ENCODE measurements at regions of chr15 and their contacts with region 1.

Region 1: GRCh38 chr15:39273717-39274411 is 307.0 kb upstream of the THBS1 start:
- DNase-seq: peak; percentile 100
- ATAC-seq: peak; percentile 90
- H3K4me3 ChIP-seq: peak overlapping the region in 2 of 3 experiments; percentile 22 to 29; a peak in 1 of 6 replicates
- H3K27ac ChIP-seq: peak overlapping the region; percentile 85
- H3K4me1 ChIP-seq: peaks cover 83% of the 10 kb centered on the region
- H3K27me3 ChIP-seq: no peaks in the 10 kb centered on the region
- CTCF ChIP-seq: no peak
- EP300 ChIP-seq: peak; percentile 86 to 96
- POLR2A ChIP-seq: no peak
- RAD21 ChIP-seq: no peak

Region 2: GRCh38 chr15:39171944-39172368 is 101.9 kb before region 1 on chr15:
- CTCF ChIA-PET with region 1: no interaction called
- POLR2A ChIA-PET with region 1: no interaction called
- in situ Hi-C with region 1: loop called (anchors 5 kb)
- intact Hi-C with region 1: loop called (anchors 1 kb)
- DNase-seq: peak; percentile 85
- ATAC-seq: peak; percentile 94
- H3K4me3 ChIP-seq: no peak overlapping the region; a peak in 1 of 6 replicates
- H3K27ac ChIP-seq: no peak overlapping the region
- H3K4me1 ChIP-seq: peaks cover 50% of the 10 kb centered on the region
- H3K27me3 ChIP-seq: no peaks in the 10 kb centered on the region
- CTCF ChIP-seq: peak; percentile 89
- EP300 ChIP-seq: peak in 1 of 2 experiments; percentile 11; a peak in 1 of 4 replicates
- POLR2A ChIP-seq: no peak
- RAD21 ChIP-seq: peak; percentile 84

Region 3: DNA sequence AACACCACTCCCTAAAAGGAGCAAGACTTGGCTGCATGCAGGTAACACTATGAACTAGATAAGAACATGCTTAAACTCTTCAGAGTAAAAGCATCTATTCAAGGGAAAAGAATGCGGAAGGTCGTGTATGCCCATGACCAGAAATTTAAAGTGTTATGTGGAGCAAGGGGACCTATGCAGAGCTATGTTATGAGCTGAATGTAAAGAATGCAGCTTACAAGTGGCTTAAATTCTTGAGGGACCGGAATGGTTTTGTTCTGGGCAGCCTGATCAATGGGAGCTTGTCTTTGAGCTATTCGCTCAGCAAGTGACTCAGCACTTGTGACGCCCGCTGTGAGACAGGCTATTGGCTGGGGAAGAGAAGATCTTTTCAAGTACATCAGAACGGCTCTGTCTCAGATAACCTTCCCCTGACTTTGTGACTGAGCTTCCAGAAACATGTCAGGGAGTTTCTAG is 60.5 kb before region 1 on chr15:
- CTCF ChIA-PET with region 1: no interaction called
- POLR2A ChIA-PET with region 1: interaction called, 5 read pairs
- in situ Hi-C with region 1: no loop called
- intact Hi-C with region 1: loop called (anchors 2 kb)
- DNase-seq: peak; percentile 94
- ATAC-seq: peak; percentile 95
- H3K4me3 ChIP-seq: no peak overlapping the region
- H3K27ac ChIP-seq: peak overlapping the region; percentile 55
- H3K4me1 ChIP-seq: peaks cover 58% of the 10 kb centered on the region
- H3K27me3 ChIP-seq: no peaks in the 10 kb centered on the region
- CTCF ChIP-seq: no peak
- EP300 ChIP-seq: peak in 1 of 2 experiments; percentile 33; a peak in 1 of 4 replicates
- POLR2A ChIP-seq: no peak
- RAD21 ChIP-seq: no peak

Region 4: GRCh38 chr15:39391230-39391629 is 117.4 kb after region 1 on chr15:
- CTCF ChIA-PET with region 1: no interaction called
- POLR2A ChIA-PET with region 1: no interaction called
- in situ Hi-C with region 1: no loop called
- intact Hi-C with region 1: no loop called
- DNase-seq: no peak
- ATAC-seq: no peak
- H3K4me3 ChIP-seq: no peak overlapping the region
- H3K27ac ChIP-seq: no peak overlapping the region
- H3K4me1 ChIP-seq: peaks cover 32% of the 10 kb centered on the region
- H3K27me3 ChIP-seq: no peaks in the 10 kb centered on the region
- CTCF ChIP-seq: no peak
- EP300 ChIP-seq: no peak
- POLR2A ChIP-seq: no peak
- RAD21 ChIP-seq: no peak

Region 5: GRCh38 chr15:39429898-39430357 is 156.1 kb after region 1 on chr15:
- CTCF ChIA-PET with region 1: no interaction called
- POLR2A ChIA-PET with region 1: no interaction called
- in situ Hi-C with region 1: no loop called
- intact Hi-C with region 1: loop called (anchors 10 kb)
- DNase-seq: peak; percentile 20
- ATAC-seq: no peak
- H3K4me3 ChIP-seq: no peak overlapping the region
- H3K27ac ChIP-seq: no peak overlapping the region
- H3K4me1 ChIP-seq: peaks cover 65% of the 10 kb centered on the region
- H3K27me3 ChIP-seq: no peaks in the 10 kb centered on the region
- CTCF ChIP-seq: no peak
- EP300 ChIP-seq: no peak
- POLR2A ChIP-seq: no peak
- RAD21 ChIP-seq: no peak

Region 6: GRCh38 chr15:39453500-39454073 is 179.7 kb after region 1 on chr15:
- CTCF ChIA-PET with region 1: interaction called, 4 read pairs
- POLR2A ChIA-PET with region 1: interaction called, 4 read pairs
- in situ Hi-C with region 1: no loop called
- intact Hi-C with region 1: loop called (anchors 5 kb)
- DNase-seq: no peak
- ATAC-seq: no peak
- H3K4me3 ChIP-seq: no peak overlapping the region
- H3K27ac ChIP-seq: no peak overlapping the region
- H3K4me1 ChIP-seq: peaks cover 52% of the 10 kb centered on the region
- H3K27me3 ChIP-seq: no peaks in the 10 kb centered on the region
- CTCF ChIP-seq: no peak
- EP300 ChIP-seq: no peak
- POLR2A ChIP-seq: no peak
- RAD21 ChIP-seq: no peak

Measured in HepG2 (cell line).